ENCODE measurements at regions of chr7 and their contacts with region 1.

Region 1: DNA sequence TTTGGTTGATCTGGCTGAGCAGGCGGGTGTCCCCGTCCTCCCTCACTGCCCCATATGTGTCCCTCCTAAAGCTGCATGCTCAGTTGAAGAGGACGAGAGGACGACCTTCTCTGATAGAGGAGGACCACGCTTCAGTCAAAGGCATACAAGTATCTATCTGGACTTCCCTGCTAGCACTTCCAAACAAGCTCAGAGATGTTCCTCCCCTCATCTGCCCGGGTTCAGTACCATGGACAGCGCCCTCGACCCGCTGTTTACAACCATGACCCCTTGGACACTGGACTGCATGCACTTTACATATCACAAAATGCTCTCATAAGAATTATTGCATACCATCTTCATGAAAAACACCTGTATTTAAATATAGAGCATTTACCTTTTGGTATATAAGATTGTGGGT is 26.9 kb upstream of the TRIM56 start:
- DNase-seq: peak; percentile 23 to 51 (median 31)
- H3K4me3 ChIP-seq: no peak overlapping the region
- H3K4me3 Mint-ChIP-seq: peak overlapping the region in 1 of 8 donors; percentile 15
- H3K27ac ChIP-seq: no peak overlapping the region
- H3K27ac Mint-ChIP-seq: no peak overlapping the region
- H3K4me1 ChIP-seq: no peaks in the 10 kb centered on the region
- H3K4me1 Mint-ChIP-seq: peaks cover 0 to 3% (median under 1%) of the 10 kb centered on the region in 4 donors
- H3K27me3 ChIP-seq: peaks cover 10% of the 10 kb centered on the region
- H3K27me3 Mint-ChIP-seq: peaks cover 26 to 38% of the 10 kb centered on the region in 2 donors

Region 2: GRCh38 chr7:100799014-100799896 is 259.1 kb before region 1 on chr7:
- CTCF ChIA-PET with region 1: no interaction called
- POLR2A ChIA-PET with region 1: no interaction called
- intact Hi-C with region 1: loop called (anchors 2 kb)
- DNase-seq: peak in 4 of 5 donors; percentile 28 to 43 (median 33)
- H3K4me3 ChIP-seq: no peak overlapping the region
- H3K4me3 Mint-ChIP-seq: no peak overlapping the region
- H3K27ac ChIP-seq: no peak overlapping the region
- H3K27ac Mint-ChIP-seq: peak overlapping the region in 3 of 7 donors; percentile 42 to 94 (median 55)
- H3K4me1 ChIP-seq: no peaks in the 10 kb centered on the region
- H3K4me1 Mint-ChIP-seq: peaks cover 0 to 8% (median 0%) of the 10 kb centered on the region in 4 donors
- H3K27me3 ChIP-seq: no peaks in the 10 kb centered on the region
- H3K27me3 Mint-ChIP-seq: peaks cover 9 to 12% of the 10 kb centered on the region in 2 donors

Region 3: DNA sequence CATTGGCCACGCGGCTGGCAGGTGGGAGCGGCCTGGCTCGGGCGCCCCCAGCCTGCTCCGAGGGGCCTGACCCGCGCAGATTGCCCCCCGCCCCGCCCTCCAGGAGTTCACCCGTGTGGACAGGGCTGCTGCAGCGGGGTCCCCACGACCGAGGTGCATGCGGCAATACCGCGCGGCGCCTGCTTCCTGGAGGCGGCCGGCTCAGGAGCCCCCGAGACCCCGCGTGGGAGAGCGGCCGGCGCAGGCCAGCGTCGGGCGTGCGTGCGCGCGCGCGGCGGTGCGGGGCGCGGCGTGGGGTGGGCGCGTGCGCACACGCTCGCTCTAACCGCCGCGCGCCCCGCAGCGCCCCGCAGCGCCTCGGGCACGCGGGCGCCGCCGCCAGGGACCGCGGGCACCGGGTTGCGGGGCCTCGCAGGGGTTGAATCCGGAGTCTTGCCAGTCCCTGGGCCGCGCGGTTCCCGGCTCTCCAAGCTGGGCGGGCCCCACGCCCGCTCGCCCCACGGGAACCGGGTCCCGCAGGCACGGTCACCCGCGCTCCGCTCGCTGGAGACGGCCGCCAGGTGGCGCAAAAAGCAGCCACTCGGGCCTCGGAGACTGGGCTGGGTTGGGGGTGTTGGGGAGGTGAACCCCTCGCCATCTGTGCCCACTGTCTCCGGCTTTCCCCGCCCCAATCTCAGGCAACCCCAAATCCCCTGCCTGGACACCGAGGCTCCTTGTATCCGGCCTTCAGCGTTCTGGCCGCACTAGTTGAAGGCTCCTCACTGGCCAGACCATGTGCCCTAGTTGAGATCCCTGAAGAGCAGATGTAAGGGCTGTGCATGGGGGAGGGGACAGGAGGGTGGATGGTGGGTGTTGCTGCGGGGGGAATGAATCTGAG is 161.4 kb before region 1 on chr7:
- CTCF ChIA-PET with region 1: interaction called, 19 read pairs
- POLR2A ChIA-PET with region 1: interaction called, 3 read pairs
- intact Hi-C with region 1: loop called (anchors 1 kb)
- DNase-seq: peak; percentile 23 to 68 (median 47)
- H3K4me3 ChIP-seq: peak overlapping the region in 1 of 2 donors; percentile 32
- H3K4me3 Mint-ChIP-seq: peak overlapping the region; percentile 10 to 78 (median 68)
- H3K27ac ChIP-seq: no peak overlapping the region
- H3K27ac Mint-ChIP-seq: peak overlapping the region in 1 of 7 donors; percentile 74
- H3K4me1 ChIP-seq: peaks cover 19% of the 10 kb centered on the region
- H3K4me1 Mint-ChIP-seq: peaks cover 7 to 26% (median 8%) of the 10 kb centered on the region in 4 donors
- H3K27me3 ChIP-seq: peaks cover 15% of the 10 kb centered on the region
- H3K27me3 Mint-ChIP-seq: peaks cover 31 to 32% of the 10 kb centered on the region in 2 donors

Region 4: GRCh38 chr7:100902638-100903037 is 155.7 kb before region 1 on chr7:
- CTCF ChIA-PET with region 1: interaction called, 18 read pairs
- POLR2A ChIA-PET with region 1: no interaction called
- intact Hi-C with region 1: loop called (anchors 1 kb)
- DNase-seq: no peak
- H3K4me3 ChIP-seq: no peak overlapping the region
- H3K4me3 Mint-ChIP-seq: no peak overlapping the region
- H3K27ac ChIP-seq: no peak overlapping the region
- H3K27ac Mint-ChIP-seq: no peak overlapping the region
- H3K4me1 ChIP-seq: no peaks in the 10 kb centered on the region
- H3K4me1 Mint-ChIP-seq: peaks cover 0 to 6% (median 0%) of the 10 kb centered on the region in 4 donors
- H3K27me3 ChIP-seq: no peaks in the 10 kb centered on the region
- H3K27me3 Mint-ChIP-seq: peaks cover 14 to 15% of the 10 kb centered on the region in 2 donors

Region 5: DNA sequence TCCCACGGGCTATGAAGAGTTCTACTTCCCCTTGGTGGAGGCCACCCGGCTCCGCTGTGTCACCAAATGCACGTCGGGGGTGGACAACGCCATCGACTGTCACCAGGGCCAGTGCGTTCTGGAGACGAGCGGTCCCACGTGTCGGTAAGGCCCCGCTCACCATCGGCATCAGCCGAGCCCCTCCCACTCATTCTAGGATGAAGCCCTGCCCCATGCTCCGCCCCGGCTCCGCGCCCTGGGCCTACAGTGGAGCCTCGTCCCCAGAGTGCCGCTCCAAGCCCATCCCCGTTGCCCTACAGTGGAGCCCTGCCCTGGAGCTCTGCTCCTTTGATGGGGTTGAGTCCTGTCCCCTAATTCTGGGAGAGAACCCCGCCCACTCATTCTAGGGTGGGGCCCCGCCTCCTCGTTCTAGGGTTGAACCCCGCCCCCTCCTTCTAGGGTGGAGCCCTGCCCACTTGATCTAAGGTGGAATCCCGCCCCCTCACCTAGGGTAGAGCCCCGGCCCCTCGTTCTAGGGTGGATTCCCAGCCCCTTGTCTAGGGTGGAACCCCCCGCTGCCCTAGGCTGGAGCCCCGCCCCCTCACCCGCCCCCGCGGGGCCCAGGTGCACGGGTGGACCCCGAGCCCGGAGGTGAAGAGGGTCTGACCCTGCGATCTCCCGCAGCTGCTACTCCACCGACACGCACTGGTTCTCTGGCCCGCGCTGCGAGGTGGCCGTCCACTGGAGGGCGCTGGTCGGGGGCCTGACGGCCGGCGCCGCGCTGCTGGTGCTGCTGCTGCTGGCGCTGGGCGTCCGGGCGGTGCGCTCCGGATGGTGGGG is 92.4 kb before region 1 on chr7:
- CTCF ChIA-PET with region 1: no interaction called
- POLR2A ChIA-PET with region 1: no interaction called
- intact Hi-C with region 1: loop called (anchors 1 kb)
- DNase-seq: peak; percentile 53 to 77 (median 64)
- H3K4me3 ChIP-seq: peak overlapping the region; percentile 36 to 47
- H3K4me3 Mint-ChIP-seq: peak overlapping the region; percentile 80 to 89 (median 84)
- H3K27ac ChIP-seq: no peak overlapping the region
- H3K27ac Mint-ChIP-seq: peak overlapping the region in 1 of 7 donors; percentile 39
- H3K4me1 ChIP-seq: peaks cover 21% of the 10 kb centered on the region
- H3K4me1 Mint-ChIP-seq: peaks cover 12 to 36% (median 19%) of the 10 kb centered on the region in 4 donors
- H3K27me3 ChIP-seq: peaks cover 38% of the 10 kb centered on the region
- H3K27me3 Mint-ChIP-seq: peaks cover 39 to 53% of the 10 kb centered on the region in 2 donors

Region 6: GRCh38 chr7:101035941-101036340 is 22.4 kb before region 1 on chr7:
- CTCF ChIA-PET with region 1: no interaction called
- POLR2A ChIA-PET with region 1: no interaction called
- intact Hi-C with region 1: no loop called
- DNase-seq: no peak
- H3K4me3 ChIP-seq: no peak overlapping the region
- H3K4me3 Mint-ChIP-seq: no peak overlapping the region
- H3K27ac ChIP-seq: no peak overlapping the region
- H3K27ac Mint-ChIP-seq: no peak overlapping the region
- H3K4me1 ChIP-seq: no peaks in the 10 kb centered on the region
- H3K4me1 Mint-ChIP-seq: no peaks in the 10 kb centered on the region
- H3K27me3 ChIP-seq: no peaks in the 10 kb centered on the region
- H3K27me3 Mint-ChIP-seq: peaks cover 6 to 10% of the 10 kb centered on the region in 2 donors